GM13976 (cell line): ENCODE measurements at regions of chrX and their contacts with region 1.

Region 1: DNA sequence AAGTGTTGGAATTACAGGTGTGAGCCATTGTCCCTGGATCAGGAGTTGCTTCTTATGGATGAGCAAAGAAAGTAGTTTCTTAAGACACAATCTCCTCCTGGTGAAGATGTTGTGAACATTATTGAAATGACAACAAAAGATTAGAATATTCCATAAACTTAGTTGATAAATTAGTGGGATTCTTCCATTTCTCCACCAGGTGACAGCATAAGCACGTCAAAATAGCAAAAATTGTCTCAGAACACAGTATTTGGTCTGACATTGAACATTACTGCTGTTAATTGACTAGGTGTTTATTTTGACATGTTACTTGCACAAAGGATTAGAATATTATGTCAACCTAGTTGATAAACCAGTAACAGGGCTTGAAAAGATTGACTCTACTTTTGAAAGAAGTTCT is 21.6 kb downstream of the CLDN34 start:
- DNase-seq: no peak
- CTCF ChIP-seq: no peak

Region 2: GRCh38 chrX:9482408-9482807 is 506.4 kb before region 1 on chrX:
- in situ Hi-C with region 1: no loop called
- DNase-seq: no peak
- CTCF ChIP-seq: no peak

Region 3: DNA sequence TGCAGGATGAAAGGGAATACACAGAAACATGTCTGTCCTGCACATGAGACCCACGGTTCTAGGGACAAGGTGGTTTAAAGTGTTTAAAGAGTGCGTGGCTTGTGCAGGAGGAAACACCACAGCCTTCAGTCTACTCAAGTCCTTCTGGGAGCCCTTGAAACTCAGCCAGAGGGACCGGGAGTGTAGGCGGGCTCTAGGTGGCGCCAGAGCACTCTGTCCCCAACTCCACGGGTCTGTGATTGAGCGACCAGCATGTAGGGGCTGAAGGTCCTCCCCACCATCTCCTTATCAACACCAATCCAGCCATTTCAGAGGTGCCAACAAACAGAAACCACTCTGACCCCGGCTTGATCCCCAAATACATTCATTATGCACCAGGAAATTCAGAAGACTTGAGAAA is 103.6 kb before region 1 on chrX:
- in situ Hi-C with region 1: loop called (anchors 10 kb)
- DNase-seq: peak; percentile 77
- CTCF ChIP-seq: peak; percentile 75

Region 4: DNA sequence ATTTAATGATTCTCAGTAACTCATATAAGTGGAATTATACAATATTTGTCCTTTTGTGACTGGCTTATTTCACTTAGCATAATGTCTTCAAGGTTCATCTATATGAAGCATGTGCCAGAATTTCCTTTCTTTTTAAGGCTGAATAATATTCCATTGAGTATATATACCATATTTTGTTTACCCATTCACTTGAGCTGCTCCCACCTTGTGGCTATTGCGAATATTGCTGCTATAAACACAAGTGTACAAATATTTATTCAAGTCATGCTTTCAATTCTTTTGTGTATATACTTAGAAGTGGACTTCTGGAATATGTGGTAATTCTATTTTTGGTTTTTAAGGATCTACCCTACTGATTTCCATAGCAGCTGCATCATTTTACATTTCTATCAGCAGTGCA is 412.5 kb after region 1 on chrX:
- in situ Hi-C with region 1: no loop called
- DNase-seq: no peak
- CTCF ChIP-seq: no peak